Posterior cingulate gyrus (tissue), 11 donors: ENCODE measurements at regions of chr11 and their contacts with region 1.

Region 1: GRCh38 chr11:6682936-6683861 is at the start of gene MRPL17:
- DNase-seq: peak; percentile 96 to 99 (median 97)

Region 2: DNA sequence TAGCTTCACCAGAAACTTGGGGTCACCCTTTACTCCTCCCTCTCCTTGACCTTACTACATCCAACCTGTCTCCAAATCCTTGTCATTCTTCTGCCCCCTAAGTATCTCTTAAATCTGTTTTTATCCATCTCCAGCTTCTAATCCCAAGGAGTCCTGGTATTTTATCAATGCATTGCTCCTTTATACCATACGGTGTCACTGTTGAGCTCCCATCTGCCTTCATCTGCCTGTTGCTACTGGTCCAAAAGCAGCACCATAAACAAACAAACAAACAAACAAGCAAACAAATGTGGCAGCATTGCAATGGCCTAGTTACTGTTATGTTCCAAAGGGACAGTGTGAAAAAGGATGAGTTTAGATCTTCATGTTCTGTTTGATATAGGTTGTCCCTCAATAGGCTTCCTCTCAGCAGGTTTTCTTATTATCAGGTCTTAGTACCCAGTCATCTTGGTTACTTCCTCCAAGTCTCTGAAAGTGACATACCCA is 151.9 kb before region 1 on chr11:
- intact Hi-C with region 1: loop called (anchors 1 kb)
- DNase-seq: no peak

Region 3: DNA sequence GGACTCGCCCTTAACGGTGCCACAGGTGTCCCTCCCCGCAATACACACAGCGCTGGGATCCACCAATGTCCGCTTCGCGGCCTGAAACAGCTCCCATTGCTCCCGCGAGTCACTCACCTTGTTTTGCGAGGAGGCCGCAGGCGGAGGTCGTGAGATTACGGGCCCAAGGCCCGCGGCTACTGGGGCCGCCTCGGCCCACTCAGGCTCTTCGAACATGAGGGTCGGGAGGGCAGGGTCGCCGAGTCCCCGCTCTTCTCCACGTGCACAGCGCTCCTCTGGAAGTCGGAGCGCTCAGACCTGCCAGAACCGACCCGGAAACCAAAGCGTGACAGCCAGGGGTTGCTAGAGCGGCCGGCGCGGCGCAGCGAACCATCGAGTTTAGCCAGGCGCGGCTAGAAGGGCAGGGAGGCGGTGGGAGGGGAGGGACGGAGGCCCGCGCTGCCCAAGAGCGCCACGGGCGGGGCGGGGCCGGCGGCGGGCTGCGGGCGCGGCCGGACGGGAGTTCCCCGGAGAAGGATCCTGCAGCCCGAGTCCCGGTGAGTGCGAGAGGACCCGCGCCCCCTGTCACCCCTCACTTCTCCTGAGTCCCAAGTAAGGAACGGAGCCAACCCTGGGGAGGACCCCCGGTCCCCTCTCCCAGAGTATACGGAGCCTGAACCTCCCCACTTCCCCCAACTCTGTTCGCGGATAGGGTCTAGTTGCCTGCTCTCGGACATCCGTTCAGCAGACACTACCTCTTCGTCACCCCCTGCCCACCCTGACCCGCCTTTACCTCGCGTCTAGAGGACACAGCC is 79.7 kb before region 1 on chr11 and contains the starts of genes ILK and RRP8:
- intact Hi-C with region 1: loop called (anchors 1 kb)
- DNase-seq: peak; percentile 88 to 98 (median 91)

Region 4: GRCh38 chr11:6612213-6613041 is 70.8 kb before region 1 on chr11 and contains the start of gene TAF10:
- intact Hi-C with region 1: loop called (anchors 1 kb)
- DNase-seq: peak; percentile 92 to 99 (median 96)

Region 5: DNA sequence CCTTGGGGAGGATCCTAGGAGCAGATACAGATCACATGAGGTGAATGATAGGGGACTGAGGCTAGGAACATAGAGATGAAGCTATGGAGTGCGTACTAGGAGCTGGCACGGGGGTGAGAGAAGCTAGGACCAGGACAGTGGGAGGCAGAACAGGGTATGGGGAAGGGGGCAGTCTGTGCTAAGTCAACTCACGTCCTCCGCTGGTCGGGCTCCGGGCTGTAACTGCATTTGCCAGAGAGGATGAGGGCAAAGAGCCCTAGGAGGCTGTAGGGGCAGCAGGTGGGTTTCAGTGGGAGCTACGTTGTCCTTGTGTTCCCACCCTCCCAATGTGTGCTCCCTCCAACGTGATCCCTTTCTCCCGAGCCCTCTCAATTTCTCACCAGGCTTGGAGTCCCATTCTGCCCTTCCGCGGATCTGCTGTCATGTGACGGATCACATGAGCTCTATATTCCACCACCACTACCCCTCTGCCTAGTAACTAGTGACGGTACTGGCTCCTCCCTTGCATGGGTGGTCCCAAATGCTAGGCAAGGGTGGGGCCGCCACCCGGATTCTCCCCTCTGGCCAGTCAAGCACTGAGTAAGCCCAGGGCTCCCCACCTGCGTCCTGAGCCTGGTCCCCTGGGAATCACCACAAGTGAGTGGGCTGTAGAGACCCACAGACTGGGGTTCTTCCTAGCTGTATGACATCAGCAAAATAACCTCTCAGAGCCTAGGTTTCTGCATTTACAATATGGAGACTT is 64.0 kb before region 1 on chr11 and contains the start of gene TPP1:
- intact Hi-C with region 1: loop called (anchors 1 kb)
- DNase-seq: peak; percentile 90 to 99 (median 95)

Region 6: DNA sequence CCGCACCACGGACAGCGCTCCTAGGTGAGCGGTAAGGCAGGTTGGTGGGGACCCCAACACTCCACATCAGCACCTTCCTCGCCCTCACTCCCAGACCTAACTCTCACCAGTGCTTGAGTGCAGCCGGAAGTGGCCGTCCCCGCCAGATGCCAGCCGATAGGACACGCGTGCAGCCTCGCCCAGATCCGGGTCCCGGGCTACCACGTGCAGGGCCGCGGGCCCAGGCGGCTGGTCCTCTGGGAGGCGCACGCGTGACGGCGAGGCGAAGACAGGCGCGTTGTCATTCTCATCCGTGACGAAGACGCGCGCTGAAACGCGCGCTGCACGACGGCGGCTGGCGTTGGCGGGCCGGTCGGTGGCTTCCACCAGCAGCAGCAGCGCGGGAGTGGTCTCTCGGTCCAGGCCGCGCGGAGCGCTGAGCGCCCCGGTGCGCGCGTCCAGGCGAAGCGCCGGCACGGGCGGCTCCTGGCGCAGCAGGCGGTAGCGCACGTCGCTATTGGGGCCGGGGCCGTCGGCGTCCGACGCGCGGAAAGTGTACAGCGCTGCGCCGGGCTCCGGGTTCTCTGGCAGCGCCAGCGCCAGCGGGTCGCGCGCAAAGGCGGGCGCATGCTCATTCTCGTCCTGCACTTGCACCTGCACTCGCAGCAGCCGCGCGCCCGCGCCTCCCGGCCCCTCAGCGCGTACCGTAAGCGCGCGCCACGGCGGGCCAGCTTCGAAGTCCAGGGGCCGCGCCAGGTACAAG is 53.1 kb before region 1 on chr11:
- intact Hi-C with region 1: no loop called
- DNase-seq: peak in 1 of 10 donors; percentile 89